Heart right ventricle (tissue), 16 donors: ENCODE measurements at regions of chr1 and their contacts with region 1.

Region 1: GRCh38 chr1:3393024-3393986 is 61.2 kb upstream of the ARHGEF16 start:
- DNase-seq: peak; percentile 65 to 76
- ATAC-seq: peak; percentile 56 to 88 (median 83)
- H3K4me3 ChIP-seq: peak overlapping the region in 9 of 10 donors; percentile 27 to 58 (median 51)
- H3K27ac ChIP-seq: peak overlapping the region; percentile 58 to 88 (median 79)
- H3K4me1 ChIP-seq: peaks cover 7 to 32% (median 18%) of the 10 kb centered on the region in 9 donors
- H3K27me3 ChIP-seq: peaks cover 0 to 62% (median 23%) of the 10 kb centered on the region in 7 donors
- CTCF ChIP-seq: peak in 1 of 9 donors; percentile 23

Region 2: DNA sequence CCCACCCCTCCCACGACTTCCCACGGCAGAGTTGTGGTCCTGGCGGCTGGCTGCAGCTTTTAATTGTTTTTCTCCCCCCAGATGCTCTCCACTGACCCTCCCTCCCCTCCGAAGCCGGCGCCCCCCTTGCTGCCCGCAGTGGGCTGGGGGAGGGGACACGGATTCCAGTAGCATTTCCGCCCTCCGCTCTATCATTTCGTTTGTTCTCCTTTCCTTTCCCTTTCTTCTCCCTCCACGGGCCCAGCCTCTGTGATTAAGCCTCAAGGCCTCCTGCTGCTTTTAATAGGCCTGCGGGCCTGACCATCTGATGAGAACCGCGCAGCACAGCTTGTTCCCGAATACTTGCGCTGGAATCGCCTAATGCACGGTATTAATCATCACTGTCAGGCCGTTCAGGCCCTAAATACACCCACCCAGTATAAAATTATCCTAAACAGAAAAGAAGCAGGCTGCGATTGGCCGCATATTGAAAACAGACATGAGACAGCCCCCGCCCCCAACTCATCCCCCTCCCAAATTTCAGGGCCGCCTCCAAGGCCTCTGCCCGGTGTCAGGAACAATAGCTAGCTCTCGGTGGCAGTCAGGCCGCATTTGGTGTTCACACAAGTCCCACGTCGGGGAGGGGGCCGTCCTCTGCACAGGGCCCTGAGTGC is 40.9 kb before region 1 on chr1:
- intact Hi-C with region 1: loop called in 1 of 10 experiments (anchors 5 kb)
- DNase-seq: no peak
- ATAC-seq: peak in 4 of 8 donors; percentile 6 to 40 (median 18)
- H3K4me3 ChIP-seq: peak overlapping the region in 1 of 10 donors; percentile 5
- H3K27ac ChIP-seq: peak overlapping the region; percentile 69 to 98 (median 88)
- H3K4me1 ChIP-seq: peaks cover 25 to 96% (median 59%) of the 10 kb centered on the region in 9 donors
- H3K27me3 ChIP-seq: peaks cover 0 to 56% (median 14%) of the 10 kb centered on the region in 7 donors
- CTCF ChIP-seq: no peak

Region 3: DNA sequence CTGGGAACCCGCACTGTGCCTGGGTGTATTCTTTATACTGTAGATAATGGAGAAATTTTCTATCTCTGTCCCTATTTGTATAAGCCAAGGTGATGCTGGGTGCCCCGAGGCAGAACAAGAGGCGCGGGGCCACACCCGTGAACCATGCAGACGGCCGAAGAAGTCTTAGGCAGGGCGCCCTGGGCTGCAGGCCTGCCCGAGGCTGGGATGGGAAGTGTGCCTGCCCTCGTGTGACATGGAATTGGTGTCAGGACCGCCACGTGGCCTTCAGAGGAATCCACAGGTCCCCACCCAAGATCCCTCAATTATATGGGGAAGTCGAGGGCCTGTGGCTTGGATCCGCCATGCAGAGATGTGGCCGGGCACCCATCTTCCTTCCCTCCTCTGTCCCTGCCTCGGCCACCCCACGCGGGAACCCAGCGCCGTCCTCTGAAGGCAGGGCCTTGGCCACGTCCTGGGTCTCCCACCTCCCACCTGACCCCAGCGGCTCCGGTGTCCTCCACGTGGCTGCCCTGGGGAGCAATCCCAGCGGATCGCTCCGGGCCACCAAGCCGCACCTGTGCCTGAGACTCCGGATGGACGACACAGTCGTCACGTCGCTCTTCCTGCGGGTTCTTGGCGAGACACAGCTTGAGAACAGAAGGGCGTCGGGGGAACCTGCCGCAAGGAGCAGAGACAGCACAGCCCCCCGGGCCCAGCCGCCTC is 41.3 kb after region 1 on chr1:
- intact Hi-C with region 1: loop called in 1 of 10 experiments (anchors 1 kb)
- DNase-seq: peak in 1 of 2 donors; percentile 7
- ATAC-seq: no peak
- H3K4me3 ChIP-seq: no peak overlapping the region
- H3K27ac ChIP-seq: no peak overlapping the region
- H3K4me1 ChIP-seq: no peaks in the 10 kb centered on the region
- H3K27me3 ChIP-seq: peaks cover 0 to 17% (median 3%) of the 10 kb centered on the region in 7 donors
- CTCF ChIP-seq: no peak